Calu3 (cell line): ENCODE measurements at regions of chr1 and their contacts with region 1.

Region 1: GRCh38 chr1:33007190-33008050 is 29.3 kb downstream of the AK2 start:
- DNase-seq: peak; percentile 67
- H3K4me3 Mint-ChIP-seq: no peak overlapping the region
- H3K27ac Mint-ChIP-seq: peak overlapping the region; percentile 18
- H3K4me1 Mint-ChIP-seq: peaks cover 57% of the 10 kb centered on the region
- H3K27me3 Mint-ChIP-seq: no peaks in the 10 kb centered on the region
- CTCF ChIP-seq: peak; percentile 71

Region 2: GRCh38 chr1:32981003-32981901 is 26.2 kb before region 1 on chr1:
- CTCF ChIA-PET with region 1: interaction called, 11 read pairs
- intact Hi-C with region 1: no loop called
- DNase-seq: peak; percentile 79
- H3K4me3 Mint-ChIP-seq: peak overlapping the region; percentile 38
- H3K27ac Mint-ChIP-seq: peak overlapping the region; percentile 94
- H3K4me1 Mint-ChIP-seq: peaks cover 23% of the 10 kb centered on the region
- H3K27me3 Mint-ChIP-seq: no peaks in the 10 kb centered on the region
- CTCF ChIP-seq: no peak

Region 3: DNA sequence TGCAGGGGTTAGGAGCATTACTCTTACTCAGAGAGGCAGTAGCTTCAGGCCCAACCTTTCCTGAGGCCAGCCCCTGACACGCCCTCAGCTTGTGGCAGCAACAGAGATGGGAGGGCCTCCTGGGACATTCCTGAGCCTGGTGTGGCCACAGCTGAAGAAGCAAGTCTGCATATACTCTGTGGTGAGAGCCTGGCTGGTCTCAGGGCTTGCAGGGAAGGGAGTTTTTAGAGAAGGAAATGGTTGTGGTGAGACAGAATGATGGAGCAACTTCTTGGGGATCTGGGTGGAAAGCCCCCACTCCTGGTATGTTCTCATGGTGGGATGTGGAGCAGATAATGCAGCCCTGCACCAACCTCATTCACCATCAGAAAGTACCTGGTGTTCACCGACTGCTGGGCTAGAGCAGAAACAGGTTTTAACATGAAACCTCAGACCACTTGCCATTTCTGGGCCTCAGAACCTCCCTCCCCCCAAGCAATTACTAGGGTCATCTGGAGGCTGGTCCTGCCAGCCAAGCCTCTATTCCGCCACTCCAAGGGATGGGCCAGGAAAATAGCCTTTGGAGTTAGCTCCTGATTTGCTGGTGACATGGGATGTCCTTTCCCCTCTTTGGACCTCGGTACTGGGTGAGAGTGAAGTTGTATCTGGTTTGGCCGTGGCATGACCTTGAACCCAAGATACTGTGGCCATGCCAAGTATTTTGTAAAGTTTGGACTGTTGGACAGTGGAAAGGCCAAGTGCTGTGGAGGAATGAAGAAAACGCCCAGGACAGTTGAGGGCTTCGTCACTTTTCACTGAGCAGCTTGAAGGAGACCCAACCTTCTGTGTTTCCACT is 14.7 kb before region 1 on chr1:
- CTCF ChIA-PET with region 1: interaction called, 15 read pairs
- intact Hi-C with region 1: no loop called
- DNase-seq: peak; percentile 90
- H3K4me3 Mint-ChIP-seq: no peak overlapping the region
- H3K27ac Mint-ChIP-seq: peak overlapping the region; percentile 74
- H3K4me1 Mint-ChIP-seq: peaks cover 44% of the 10 kb centered on the region
- H3K27me3 Mint-ChIP-seq: no peaks in the 10 kb centered on the region
- CTCF ChIP-seq: no peak